H1 (cell line): ENCODE measurements at regions of chr4 and their contacts with region 1.

Region 1: GRCh38 chr4:72468904-72469502 is 100.0 kb downstream of the ADAMTS3 start:
- DNase-seq: no peak
- H3K4me3 ChIP-seq: no peak overlapping the region
- H3K27ac ChIP-seq: no peak overlapping the region
- H3K4me1 ChIP-seq: no peaks in the 10 kb centered on the region
- H3K27me3 ChIP-seq: no peaks in the 10 kb centered on the region
- CTCF ChIP-seq: no peak; a peak in 1 of 4 replicates
- EP300 ChIP-seq: no peak
- POLR2A ChIP-seq: no peak
- RAD21 ChIP-seq: peak in 1 of 2 experiments; percentile 33; a peak in 2 of 4 replicates

Region 2: DNA sequence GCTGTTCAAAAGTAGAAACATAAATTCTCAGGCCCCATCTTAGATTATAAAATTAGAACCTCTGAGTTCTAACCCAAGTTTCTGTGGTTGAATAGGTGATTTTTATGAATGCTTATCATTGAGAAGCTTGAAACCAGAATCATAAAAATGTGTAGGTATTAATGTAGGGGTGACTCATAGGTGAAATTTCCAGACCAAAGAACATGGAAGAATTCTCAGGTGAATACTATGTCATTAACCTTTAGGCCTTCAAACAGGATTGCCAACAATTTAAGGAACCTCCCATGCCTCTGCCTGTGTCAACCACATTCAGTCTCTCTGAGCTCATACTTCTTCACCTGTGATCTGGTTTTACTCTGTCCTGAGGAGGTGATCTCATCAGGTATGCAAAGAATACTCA is 259.4 kb before region 1 on chr4:
- CTCF ChIA-PET with region 1: no interaction called
- POLR2A ChIA-PET with region 1: no interaction called
- DNase-seq: no peak
- H3K4me3 ChIP-seq: no peak overlapping the region
- H3K27ac ChIP-seq: no peak overlapping the region
- H3K4me1 ChIP-seq: no peaks in the 10 kb centered on the region
- H3K27me3 ChIP-seq: no peaks in the 10 kb centered on the region
- CTCF ChIP-seq: no peak
- EP300 ChIP-seq: no peak
- POLR2A ChIP-seq: no peak
- RAD21 ChIP-seq: no peak

Region 3: DNA sequence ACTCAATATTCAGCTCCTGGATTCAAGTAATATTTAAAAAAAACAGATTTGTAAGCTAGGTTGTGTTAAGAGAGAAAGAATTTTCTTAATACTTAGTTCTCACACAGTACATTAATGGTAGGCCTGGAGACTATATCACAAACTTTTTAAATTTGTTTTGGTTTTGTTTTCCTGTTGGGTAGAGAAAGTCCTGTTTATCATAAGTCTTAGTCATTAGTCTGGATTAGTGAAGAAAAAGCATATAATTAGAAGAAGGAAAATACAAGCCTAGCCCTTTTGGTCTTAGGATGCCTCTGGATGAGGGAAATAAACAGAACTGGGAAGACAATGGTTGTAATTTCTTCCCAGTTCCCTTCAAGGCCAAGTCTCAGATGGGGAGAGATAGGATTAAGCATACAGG is 63.6 kb before region 1 on chr4:
- CTCF ChIA-PET with region 1: no interaction called
- POLR2A ChIA-PET with region 1: no interaction called
- DNase-seq: no peak
- H3K4me3 ChIP-seq: no peak overlapping the region
- H3K27ac ChIP-seq: no peak overlapping the region
- H3K4me1 ChIP-seq: no peaks in the 10 kb centered on the region
- H3K27me3 ChIP-seq: no peaks in the 10 kb centered on the region
- CTCF ChIP-seq: no peak
- EP300 ChIP-seq: no peak
- POLR2A ChIP-seq: no peak
- RAD21 ChIP-seq: no peak

Region 4: GRCh38 chr4:72432282-72432681 is 36.7 kb before region 1 on chr4:
- CTCF ChIA-PET with region 1: interaction called, 13 read pairs
- POLR2A ChIA-PET with region 1: no interaction called
- DNase-seq: no peak
- H3K4me3 ChIP-seq: no peak overlapping the region
- H3K27ac ChIP-seq: no peak overlapping the region
- H3K4me1 ChIP-seq: no peaks in the 10 kb centered on the region
- H3K27me3 ChIP-seq: no peaks in the 10 kb centered on the region
- CTCF ChIP-seq: no peak
- EP300 ChIP-seq: no peak
- POLR2A ChIP-seq: no peak
- RAD21 ChIP-seq: no peak